ENCODE measurements at regions of chr4 and their contacts with region 1.

Region 1: GRCh38 chr4:2462218-2462991 is 6.5 kb upstream of the RNF4 start:
- DNase-seq: peak; percentile 62 to 65
- ATAC-seq: peak; percentile 96
- H3K4me3 ChIP-seq: peak overlapping the region; percentile 60
- H3K27ac ChIP-seq: peak overlapping the region; percentile 80 to 89
- H3K4me1 ChIP-seq: peaks cover 8% of the 10 kb centered on the region
- CTCF ChIP-seq: peak; percentile 49
- EP300 ChIP-seq: no peak
- POLR2A ChIP-seq: peak; percentile 37
- RAD21 ChIP-seq: peak; percentile 17 to 60; a peak in 4 of 5 replicates

Region 2: DNA sequence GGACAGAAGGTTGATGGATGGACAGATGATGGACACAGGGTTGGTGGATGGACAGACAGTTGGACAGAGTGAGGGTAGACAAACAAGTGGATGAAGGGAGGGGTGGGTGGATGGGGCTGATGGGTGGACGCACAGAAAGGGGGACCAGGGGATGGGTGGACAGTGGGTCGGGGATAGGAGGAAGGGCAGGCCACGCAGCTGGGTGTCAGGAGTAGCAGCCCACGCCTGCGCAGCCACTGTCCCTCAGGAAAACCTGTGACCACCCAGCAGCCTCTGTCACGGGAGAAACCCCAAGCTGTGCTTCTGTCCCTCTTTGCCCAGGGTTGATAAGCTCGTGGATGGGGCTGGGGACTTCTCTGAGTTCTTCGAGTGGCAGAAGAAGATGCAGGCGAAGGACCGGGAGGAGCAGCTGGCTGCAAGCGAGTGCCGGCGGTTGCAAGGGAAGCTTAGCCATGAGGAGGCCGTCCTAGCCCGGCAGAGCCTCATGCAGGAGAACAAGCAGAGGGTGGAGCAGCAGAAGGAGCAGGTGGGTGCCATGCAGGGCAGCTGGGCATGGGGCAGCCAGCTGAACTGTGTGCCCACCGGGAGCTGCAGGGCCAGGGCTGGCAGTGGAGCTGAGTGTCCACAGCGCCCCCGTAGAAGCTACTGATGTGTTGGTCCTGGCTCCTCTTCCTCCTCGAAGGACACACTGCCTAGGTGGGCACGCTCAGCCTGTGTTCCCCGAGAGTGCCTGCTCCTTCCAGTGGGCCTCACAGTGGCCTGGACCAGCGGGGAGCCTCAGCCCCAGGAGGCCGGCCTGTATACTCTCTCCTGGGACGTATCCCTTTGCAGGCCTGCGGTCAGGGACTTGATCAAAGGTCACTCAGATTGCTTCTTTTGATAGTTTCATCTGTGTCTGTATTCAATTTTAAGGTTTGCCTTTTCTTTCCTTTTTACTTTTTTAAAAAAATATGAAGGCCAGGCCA is 10.3 kb before region 1 on chr4:
- CTCF ChIA-PET with region 1: interaction called, 10 read pairs
- POLR2A ChIA-PET with region 1: no interaction called
- DNase-seq: no peak
- ATAC-seq: peak; percentile 19; a peak in 3 of 6 replicates
- H3K4me3 ChIP-seq: no peak overlapping the region
- H3K27ac ChIP-seq: no peak overlapping the region
- H3K4me1 ChIP-seq: no peaks in the 10 kb centered on the region
- CTCF ChIP-seq: no peak
- EP300 ChIP-seq: no peak
- POLR2A ChIP-seq: no peak
- RAD21 ChIP-seq: no peak

Region 3: GRCh38 chr4:2696423-2696822 is 234.0 kb after region 1 on chr4:
- CTCF ChIA-PET with region 1: no interaction called
- POLR2A ChIA-PET with region 1: no interaction called
- DNase-seq: no peak
- ATAC-seq: no peak
- H3K4me3 ChIP-seq: no peak overlapping the region
- H3K27ac ChIP-seq: no peak overlapping the region
- H3K4me1 ChIP-seq: no peaks in the 10 kb centered on the region
- CTCF ChIP-seq: no peak
- EP300 ChIP-seq: no peak
- POLR2A ChIP-seq: no peak
- RAD21 ChIP-seq: no peak

Measured in A549 (cell line).